Activated CD8-positive, alpha-beta T cell treated with anti-CD3 and anti-CD28 coated beads, Interleukin-2, amount 10 ng/mL, durations not matched to agents 7 days and 5 days (primary cell): ENCODE measurements at regions of chr2 and their contacts with region 1.

Region 1: GRCh38 chr2:189142893-189143759 is 36.4 kb downstream of the COL5A2 start:
- DNase-seq: peak; percentile 68
- ATAC-seq: peak; percentile 85
- H3K4me3 Mint-ChIP-seq: no peak overlapping the region
- H3K27ac Mint-ChIP-seq: no peak overlapping the region
- H3K4me1 Mint-ChIP-seq: no peaks in the 10 kb centered on the region
- H3K27me3 Mint-ChIP-seq: no peaks in the 10 kb centered on the region

Region 2: DNA sequence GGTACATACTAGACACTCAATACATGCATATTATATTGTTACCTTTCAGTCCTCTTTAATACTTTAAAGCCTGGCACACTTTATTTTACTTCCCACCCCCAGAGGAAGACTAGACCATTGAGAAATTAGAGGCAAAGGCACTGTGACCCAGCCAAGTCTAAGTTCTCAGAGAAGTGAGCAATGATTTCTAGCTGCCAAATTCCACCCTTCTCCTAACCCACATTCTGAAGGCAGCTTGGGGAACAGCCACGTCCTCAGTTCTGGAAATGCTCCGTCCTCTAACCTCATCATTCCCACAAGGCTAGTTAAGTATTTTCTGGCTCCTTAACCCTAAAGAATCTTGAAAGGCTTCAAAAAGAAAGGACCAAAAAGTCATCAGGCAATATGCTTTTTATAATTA is 50.2 kb before region 1 on chr2:
- CTCF ChIA-PET with region 1: interaction called, 17 read pairs
- POLR2A ChIA-PET with region 1: no interaction called
- DNase-seq: no peak
- ATAC-seq: no peak
- H3K4me3 Mint-ChIP-seq: no peak overlapping the region
- H3K27ac Mint-ChIP-seq: peak overlapping the region; percentile 2
- H3K4me1 Mint-ChIP-seq: peaks cover 5% of the 10 kb centered on the region
- H3K27me3 Mint-ChIP-seq: no peaks in the 10 kb centered on the region

Region 3: DNA sequence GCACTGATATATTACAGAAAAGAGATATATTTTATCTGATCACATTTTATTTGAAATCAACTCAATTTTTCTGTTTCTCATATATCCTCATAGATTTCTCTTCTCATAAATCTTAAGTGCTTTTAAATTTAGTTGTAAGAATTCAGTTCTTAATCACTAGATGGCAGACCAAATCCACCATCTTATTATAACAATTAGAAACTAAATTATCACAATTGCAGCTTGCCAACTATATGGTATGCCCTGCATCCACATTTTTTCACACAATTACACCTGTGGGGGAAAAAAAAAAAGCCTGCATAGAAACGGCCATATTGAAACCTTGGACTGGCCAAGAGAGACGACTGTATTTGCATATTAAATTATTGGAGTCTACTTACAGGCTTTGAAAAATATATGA is 28.0 kb before region 1 on chr2:
- CTCF ChIA-PET with region 1: interaction called, 12 read pairs
- POLR2A ChIA-PET with region 1: no interaction called
- DNase-seq: no peak
- ATAC-seq: no peak
- H3K4me3 Mint-ChIP-seq: no peak overlapping the region
- H3K27ac Mint-ChIP-seq: no peak overlapping the region
- H3K4me1 Mint-ChIP-seq: no peaks in the 10 kb centered on the region
- H3K27me3 Mint-ChIP-seq: no peaks in the 10 kb centered on the region

Region 4: DNA sequence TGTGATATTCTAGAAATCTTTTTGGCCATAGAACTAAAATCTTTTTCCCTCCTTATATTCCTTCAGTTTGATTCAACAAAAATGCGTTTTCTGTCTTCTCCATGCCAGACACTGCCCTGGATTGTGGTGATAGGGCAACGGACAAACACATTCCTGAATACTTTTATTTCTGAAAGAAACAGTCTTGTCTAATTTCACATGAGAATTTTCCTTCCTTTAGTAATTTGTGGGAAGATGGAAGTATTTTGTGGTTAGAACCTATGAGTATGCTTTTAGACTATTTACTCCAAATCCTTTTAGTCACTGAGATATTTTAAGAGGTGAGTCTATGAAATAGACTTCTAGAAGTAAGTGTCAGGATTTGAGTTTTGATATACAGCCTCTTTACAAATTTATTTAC is 13.2 kb before region 1 on chr2:
- CTCF ChIA-PET with region 1: interaction called, 14 read pairs
- POLR2A ChIA-PET with region 1: no interaction called
- DNase-seq: no peak
- ATAC-seq: no peak
- H3K4me3 Mint-ChIP-seq: no peak overlapping the region
- H3K27ac Mint-ChIP-seq: no peak overlapping the region
- H3K4me1 Mint-ChIP-seq: no peaks in the 10 kb centered on the region
- H3K27me3 Mint-ChIP-seq: peaks cover 5% of the 10 kb centered on the region

Region 5: DNA sequence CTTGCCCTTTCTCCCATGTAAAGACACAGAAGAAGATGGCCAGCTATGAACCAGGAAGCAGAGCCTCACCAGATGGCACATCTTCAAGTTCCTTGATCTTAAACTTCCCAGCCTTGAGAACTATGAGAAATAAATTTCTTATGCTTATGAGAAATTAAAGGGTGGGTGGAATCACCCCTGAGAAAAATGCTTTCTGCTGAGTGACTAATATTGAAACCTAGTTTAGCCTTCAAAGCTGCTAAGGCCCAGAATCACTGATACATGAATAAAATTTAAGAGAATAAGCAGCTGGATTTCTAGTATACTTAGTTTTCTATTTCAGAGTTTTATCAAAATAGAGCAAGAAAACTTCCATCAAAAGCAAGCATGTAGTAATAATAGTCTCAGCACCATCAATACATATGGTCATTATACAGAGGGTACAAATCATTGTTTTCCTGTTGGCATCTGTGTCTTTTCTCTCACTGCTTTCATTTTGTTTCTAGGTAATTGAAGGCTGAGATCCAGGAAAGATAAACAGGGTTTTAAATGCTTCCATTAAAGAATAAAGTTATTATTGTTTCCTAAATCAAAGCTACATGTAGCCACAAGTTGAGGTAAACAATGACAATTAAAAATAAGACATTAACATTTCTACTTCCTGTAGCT is 89.8 kb after region 1 on chr2:
- CTCF ChIA-PET with region 1: no interaction called
- POLR2A ChIA-PET with region 1: no interaction called
- DNase-seq: no peak
- ATAC-seq: no peak
- H3K4me3 Mint-ChIP-seq: no peak overlapping the region
- H3K27ac Mint-ChIP-seq: no peak overlapping the region
- H3K4me1 Mint-ChIP-seq: peaks cover 9% of the 10 kb centered on the region
- H3K27me3 Mint-ChIP-seq: no peaks in the 10 kb centered on the region

Region 6: DNA sequence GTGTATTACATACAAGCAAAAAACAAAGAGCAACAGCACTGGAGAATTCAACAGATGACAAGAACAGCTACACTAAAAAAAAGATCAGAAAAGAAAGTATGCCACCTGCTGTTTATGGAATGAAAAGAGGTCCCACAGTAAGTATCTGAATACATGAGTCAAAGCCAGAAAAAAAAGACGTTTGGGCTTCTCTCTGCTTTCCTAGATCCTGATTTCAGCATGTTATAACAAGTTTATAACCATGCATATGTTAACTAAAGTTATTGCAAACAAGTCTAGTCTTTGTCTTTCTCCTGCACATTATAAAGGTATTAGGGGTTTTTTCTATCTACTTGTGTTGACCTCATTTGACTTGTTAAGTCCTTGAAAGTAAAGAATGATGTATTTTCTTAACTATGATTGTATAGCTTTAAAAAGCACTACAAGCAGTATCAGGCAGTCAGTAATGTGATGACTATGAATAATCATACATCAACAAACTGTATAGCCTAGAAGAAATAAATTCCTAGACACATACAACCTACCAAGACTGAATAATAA is 144.9 kb after region 1 on chr2:
- CTCF ChIA-PET with region 1: interaction called, 42 read pairs
- POLR2A ChIA-PET with region 1: no interaction called
- DNase-seq: no peak
- ATAC-seq: peak; percentile 70
- H3K4me3 Mint-ChIP-seq: no peak overlapping the region
- H3K27ac Mint-ChIP-seq: no peak overlapping the region
- H3K4me1 Mint-ChIP-seq: peaks cover 15% of the 10 kb centered on the region
- H3K27me3 Mint-ChIP-seq: no peaks in the 10 kb centered on the region

Region 7: DNA sequence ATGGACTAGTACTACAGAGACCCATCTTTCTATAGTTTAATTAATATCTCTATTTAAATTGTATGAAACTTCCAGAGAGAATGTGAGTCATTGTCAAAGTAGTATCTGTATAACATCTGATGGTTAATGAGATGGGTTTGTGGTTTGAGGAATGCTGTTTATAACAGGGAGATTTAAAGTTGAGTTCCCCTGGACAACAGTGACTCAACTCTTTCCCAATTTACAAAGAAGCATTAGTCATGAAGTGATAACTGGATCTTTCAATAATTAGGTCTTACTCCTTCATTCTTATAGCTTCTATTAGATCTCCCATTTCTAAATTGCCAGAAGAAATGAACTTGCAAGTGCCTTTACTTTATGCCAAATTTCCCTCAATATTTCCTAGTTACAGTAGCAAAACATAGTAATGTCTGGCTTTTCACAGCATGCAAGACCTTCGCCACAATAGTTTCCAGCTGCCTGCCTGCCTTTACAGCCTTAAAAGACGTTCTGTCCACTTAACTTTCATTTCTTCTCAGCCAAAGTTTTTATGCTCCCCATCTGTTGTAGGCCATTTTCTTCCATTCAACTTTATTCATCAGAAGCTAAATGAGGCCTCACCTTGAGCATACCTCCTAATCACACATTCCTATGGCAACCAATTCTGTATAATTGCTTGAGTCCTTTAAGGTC is 250.4 kb after region 1 on chr2:
- CTCF ChIA-PET with region 1: interaction called, 10 read pairs
- POLR2A ChIA-PET with region 1: no interaction called
- DNase-seq: no peak
- ATAC-seq: no peak
- H3K4me3 Mint-ChIP-seq: no peak overlapping the region
- H3K27ac Mint-ChIP-seq: no peak overlapping the region
- H3K4me1 Mint-ChIP-seq: no peaks in the 10 kb centered on the region
- H3K27me3 Mint-ChIP-seq: no peaks in the 10 kb centered on the region

Region 8: DNA sequence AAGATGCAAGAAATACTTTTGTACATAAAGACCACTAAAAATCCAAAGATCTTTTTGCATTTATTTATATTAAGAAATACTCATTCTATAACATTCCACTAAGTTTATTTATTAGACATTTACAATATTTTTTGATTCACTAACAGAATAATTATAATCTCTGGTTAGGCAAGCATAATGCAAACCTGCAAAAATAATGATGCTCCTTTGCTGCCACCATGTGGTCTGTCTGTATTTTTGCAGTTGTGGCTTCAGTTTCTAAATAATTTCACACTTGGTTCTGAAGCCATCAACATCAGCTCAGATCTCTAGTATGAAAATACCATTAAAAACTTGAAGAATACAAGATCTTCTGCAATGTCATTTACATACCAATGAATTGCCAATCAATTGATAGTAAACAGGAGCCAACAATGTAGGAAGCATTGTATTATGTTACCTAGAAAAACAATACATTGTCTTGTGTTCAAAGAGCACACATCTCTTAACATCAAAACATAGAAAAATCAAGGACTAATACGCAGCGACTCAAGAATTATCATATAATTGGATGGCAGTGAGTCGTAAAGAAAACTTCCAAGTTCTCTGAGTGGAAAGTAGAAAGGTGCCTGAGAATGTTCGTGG is 269.3 kb after region 1 on chr2:
- CTCF ChIA-PET with region 1: interaction called, 29 read pairs
- POLR2A ChIA-PET with region 1: no interaction called
- DNase-seq: peak; percentile 66
- ATAC-seq: no peak
- H3K4me3 Mint-ChIP-seq: no peak overlapping the region
- H3K27ac Mint-ChIP-seq: no peak overlapping the region
- H3K4me1 Mint-ChIP-seq: peaks cover 9% of the 10 kb centered on the region
- H3K27me3 Mint-ChIP-seq: no peaks in the 10 kb centered on the region